HCT116 (cell line): ENCODE measurements at regions of chr2 and their contacts with region 1.

Region 1: GRCh38 chr2:84276585-84277255 is 182.4 kb downstream of the SUCLG1 start:
- DNase-seq: no peak
- ATAC-seq: no peak
- H3K4me3 ChIP-seq: no peak overlapping the region
- H3K27ac ChIP-seq: no peak overlapping the region
- H3K4me1 ChIP-seq: no peaks in the 10 kb centered on the region
- H3K27me3 ChIP-seq: no peaks in the 10 kb centered on the region
- CTCF ChIP-seq: no peak
- POLR2A ChIP-seq: no peak
- RAD21 ChIP-seq: no peak

Region 2: GRCh38 chr2:83944191-83944590 is 332.5 kb before region 1 on chr2:
- CTCF ChIA-PET with region 1: no interaction called
- POLR2A ChIA-PET with region 1: no interaction called
- RAD21 ChIA-PET with region 1: no interaction called
- intact Hi-C with region 1: no loop called
- DNase-seq: no peak
- ATAC-seq: no peak
- H3K4me3 ChIP-seq: no peak overlapping the region
- H3K27ac ChIP-seq: no peak overlapping the region
- H3K4me1 ChIP-seq: no peaks in the 10 kb centered on the region
- H3K27me3 ChIP-seq: no peaks in the 10 kb centered on the region
- CTCF ChIP-seq: no peak
- POLR2A ChIP-seq: no peak
- RAD21 ChIP-seq: no peak

Region 3: GRCh38 chr2:84290537-84290936 is 13.8 kb after region 1 on chr2:
- CTCF ChIA-PET with region 1: no interaction called
- POLR2A ChIA-PET with region 1: no interaction called
- RAD21 ChIA-PET with region 1: no interaction called
- intact Hi-C with region 1: loop called (anchors 1 kb)
- DNase-seq: no peak
- ATAC-seq: no peak
- H3K4me3 ChIP-seq: no peak overlapping the region
- H3K27ac ChIP-seq: no peak overlapping the region
- H3K4me1 ChIP-seq: peaks cover 0 to 11% of the 10 kb centered on the region in 2 experiments; a peak in 2 of 4 replicates
- H3K27me3 ChIP-seq: no peaks in the 10 kb centered on the region
- CTCF ChIP-seq: no peak
- POLR2A ChIP-seq: no peak
- RAD21 ChIP-seq: no peak